ENCODE measurements at regions of chr19 and their contacts with region 1.

Region 1: GRCh38 chr19:4524808-4525562 is 6.7 kb upstream of the PLIN4 start:
- DNase-seq: peak; percentile 78
- ATAC-seq: peak; percentile 90
- H3K4me3 Mint-ChIP-seq: no peak overlapping the region
- H3K27ac Mint-ChIP-seq: no peak overlapping the region
- H3K4me1 Mint-ChIP-seq: no peaks in the 10 kb centered on the region
- H3K27me3 Mint-ChIP-seq: no peaks in the 10 kb centered on the region

Region 2: DNA sequence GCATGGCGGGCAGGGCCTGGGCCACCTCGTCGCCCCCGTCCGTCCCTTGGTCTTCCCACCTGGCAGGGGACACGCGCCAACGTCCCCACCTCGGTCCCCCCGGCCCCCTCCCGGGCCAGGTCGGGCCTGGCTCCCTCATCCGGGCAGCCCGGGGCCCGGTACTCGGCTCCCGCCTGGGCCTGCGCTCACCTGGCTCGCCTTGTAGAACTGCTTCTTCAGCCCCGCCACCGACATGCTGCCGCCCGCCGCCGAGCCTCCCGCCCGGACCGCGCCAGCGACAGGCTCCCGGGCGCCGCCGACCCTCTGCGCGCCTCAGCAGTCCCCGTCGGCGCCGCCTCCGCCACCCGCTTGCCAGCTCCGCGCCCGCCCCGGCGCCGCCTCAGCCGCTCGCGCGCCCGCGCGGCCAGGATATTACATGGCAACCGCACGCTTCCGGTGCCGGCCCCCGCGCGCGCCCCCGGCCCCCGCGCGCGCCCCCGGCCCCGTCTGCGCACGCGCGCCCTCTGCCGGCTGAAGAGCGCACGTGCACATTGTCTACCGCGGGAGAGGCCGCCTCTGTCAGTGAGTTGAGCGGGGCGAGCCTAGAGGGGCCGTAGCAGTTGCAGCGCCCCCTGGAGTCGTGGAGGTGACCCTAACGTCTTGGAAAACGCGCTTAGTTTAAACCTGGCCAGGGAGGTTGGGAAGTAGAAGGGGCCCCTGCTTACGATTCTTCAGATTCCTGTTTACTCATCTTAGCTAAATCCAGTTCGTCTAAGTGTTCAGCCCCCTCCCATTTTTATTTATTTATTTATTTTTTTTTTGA is 124.6 kb before region 1 on chr19 and contains the start of gene SH3GL1:
- CTCF ChIA-PET with region 1: no interaction called
- DNase-seq: peak; percentile 94
- ATAC-seq: peak; percentile 67
- H3K4me3 Mint-ChIP-seq: peak within 1 kb of the TSS; percentile 97
- H3K27ac Mint-ChIP-seq: peak within 1 kb of the TSS; percentile 97
- H3K4me1 Mint-ChIP-seq: peaks cover 58% of the 10 kb centered on the region
- H3K27me3 Mint-ChIP-seq: no peaks in the 10 kb centered on the region
- total RNA-seq, gene SH3GL1: 43.3 to 57.7 TPM

Region 3: DNA sequence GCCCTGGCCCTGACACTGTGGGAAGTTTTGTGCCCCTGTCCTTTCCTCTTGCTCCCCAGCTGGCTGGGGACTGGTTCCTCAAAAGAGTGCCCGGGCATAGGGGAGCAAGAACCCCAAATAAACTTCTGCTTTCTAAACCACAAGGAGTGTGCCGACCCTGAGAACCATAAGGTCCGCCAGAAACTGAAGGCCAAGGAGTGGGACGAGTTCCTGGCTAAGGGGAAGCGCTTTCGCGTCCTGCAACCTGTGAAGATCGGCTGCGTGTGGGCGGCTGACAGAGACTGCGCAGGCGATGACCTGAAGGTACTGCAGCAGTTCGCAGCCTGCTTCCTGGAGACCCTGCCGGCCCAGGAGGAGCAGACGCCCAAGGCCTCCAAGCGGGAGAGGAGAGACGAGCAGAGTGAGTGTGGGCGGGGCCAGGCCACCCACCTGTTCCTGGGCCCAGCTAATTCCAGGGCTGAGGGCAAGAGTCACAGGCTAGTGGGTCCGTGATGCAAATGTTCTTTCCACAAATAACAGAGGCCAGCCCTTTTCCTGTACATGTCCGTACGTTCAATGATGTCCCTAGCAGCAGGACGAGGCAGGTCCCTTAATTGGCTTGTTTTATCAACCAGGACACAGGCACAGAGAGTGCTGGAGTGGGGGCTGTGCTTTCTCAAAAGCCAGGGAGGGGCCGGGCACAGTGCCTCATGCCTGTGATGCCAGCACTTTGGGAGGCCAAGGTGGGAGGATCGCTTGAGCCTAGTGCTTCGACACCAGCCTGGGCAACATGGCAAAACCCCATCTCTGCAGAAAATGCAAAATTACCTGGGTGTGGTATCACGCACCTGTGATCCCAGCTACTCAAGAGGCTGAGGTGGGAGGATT is 92.9 kb before region 1 on chr19:
- CTCF ChIA-PET with region 1: no interaction called
- DNase-seq: no peak
- ATAC-seq: no peak
- H3K4me3 Mint-ChIP-seq: no peak overlapping the region
- H3K27ac Mint-ChIP-seq: no peak overlapping the region
- H3K4me1 Mint-ChIP-seq: no peaks in the 10 kb centered on the region
- H3K27me3 Mint-ChIP-seq: no peaks in the 10 kb centered on the region

Region 4: DNA sequence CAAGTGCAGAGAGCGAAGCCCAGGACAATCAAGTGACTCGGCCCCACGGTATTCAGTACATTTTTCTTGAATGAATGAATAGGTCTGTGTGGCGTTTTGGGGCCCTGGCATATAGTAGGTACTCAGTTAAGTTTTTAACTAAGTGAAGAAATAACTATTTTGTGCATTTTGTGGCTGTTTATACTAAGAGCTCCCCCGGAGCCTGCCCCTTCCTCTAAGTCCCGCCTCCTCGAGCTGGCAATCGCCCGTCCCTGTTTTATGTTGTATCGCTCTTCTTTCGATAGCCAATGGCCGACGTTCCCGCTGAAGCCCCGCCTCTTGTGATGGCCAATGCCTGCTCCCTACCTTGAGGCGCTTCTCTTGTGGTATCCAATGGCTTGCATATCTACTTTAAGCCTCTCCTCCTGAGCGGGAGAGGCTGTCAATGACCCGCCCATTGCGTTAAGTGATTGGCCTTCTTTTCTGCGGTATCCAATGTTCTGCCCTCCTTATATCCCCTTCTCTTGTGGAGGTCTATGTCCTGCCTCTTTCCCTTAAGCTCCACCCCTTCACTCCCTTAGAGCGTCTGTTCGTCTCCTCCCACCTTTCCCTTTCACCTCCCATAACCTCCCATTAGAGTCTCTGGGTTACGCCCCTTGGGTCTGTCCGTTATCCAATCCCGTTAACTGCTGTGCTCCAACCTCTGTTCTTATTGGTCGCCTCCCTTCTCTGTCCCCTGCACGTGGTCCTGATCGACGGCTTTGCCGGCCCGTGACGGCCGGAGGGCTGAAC is 53.4 kb before region 1 on chr19:
- CTCF ChIA-PET with region 1: interaction called, 16 read pairs
- DNase-seq: peak; percentile 99
- ATAC-seq: peak; percentile 91
- H3K4me3 Mint-ChIP-seq: no peak overlapping the region
- H3K27ac Mint-ChIP-seq: no peak overlapping the region
- H3K4me1 Mint-ChIP-seq: peaks cover 23% of the 10 kb centered on the region
- H3K27me3 Mint-ChIP-seq: no peaks in the 10 kb centered on the region

Region 5: DNA sequence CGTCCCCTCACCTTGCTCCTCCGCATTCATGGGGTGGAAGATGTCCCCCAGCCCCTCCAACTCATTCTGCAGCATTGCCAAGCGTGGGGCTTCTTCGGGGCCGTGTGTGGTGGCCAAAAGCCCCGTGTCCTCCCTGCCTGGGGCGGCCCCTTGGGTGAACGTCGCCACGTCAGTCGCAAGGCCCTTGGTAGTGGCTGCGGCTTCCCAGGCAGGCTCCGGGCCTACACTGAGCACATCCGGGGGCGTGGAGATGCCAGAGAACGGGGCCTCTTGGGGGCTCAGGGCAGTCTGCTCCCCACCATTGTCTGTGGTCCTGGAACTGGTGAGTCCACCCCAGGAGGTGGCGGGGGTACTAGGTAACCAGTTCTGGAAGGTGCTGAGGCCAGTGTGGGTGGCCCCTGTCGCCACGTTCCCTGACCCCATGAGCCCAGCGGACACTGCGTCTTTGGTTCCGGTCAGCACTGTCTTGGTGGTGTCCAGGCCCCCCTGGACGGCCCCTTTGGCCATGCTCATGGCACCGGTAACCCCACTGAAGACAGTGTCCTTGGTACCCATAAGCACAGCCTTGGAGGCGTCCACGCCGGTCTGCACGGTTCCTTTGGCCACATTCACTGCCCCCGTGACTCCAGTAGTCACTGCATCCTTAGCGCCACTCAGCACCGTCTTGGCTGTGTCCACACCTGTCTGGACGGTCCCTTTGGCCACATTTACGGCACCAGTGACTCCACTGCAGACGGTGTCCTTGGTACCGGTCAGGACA is 14.4 kb before region 1 on chr19:
- CTCF ChIA-PET with region 1: interaction called, 16 read pairs
- DNase-seq: no peak
- ATAC-seq: no peak
- H3K4me3 Mint-ChIP-seq: no peak overlapping the region
- H3K27ac Mint-ChIP-seq: no peak overlapping the region
- H3K4me1 Mint-ChIP-seq: peaks cover 11% of the 10 kb centered on the region
- H3K27me3 Mint-ChIP-seq: no peaks in the 10 kb centered on the region

Region 6: GRCh38 chr19:4534836-4535658 is 10.1 kb after region 1 on chr19 and contains the start of gene PLIN5:
- CTCF ChIA-PET with region 1: interaction called, 20 read pairs
- DNase-seq: peak; percentile 45
- ATAC-seq: peak; percentile 52
- H3K4me3 Mint-ChIP-seq: no peak within 1 kb of the TSS
- H3K27ac Mint-ChIP-seq: no peak within 1 kb of the TSS
- H3K4me1 Mint-ChIP-seq: peaks cover under 1% of the 10 kb centered on the region
- H3K27me3 Mint-ChIP-seq: peaks cover 12% of the 10 kb centered on the region
- total RNA-seq, gene PLIN5: not detected